ENCODE measurements at regions of chr13 and their contacts with region 1.

Region 1: DNA sequence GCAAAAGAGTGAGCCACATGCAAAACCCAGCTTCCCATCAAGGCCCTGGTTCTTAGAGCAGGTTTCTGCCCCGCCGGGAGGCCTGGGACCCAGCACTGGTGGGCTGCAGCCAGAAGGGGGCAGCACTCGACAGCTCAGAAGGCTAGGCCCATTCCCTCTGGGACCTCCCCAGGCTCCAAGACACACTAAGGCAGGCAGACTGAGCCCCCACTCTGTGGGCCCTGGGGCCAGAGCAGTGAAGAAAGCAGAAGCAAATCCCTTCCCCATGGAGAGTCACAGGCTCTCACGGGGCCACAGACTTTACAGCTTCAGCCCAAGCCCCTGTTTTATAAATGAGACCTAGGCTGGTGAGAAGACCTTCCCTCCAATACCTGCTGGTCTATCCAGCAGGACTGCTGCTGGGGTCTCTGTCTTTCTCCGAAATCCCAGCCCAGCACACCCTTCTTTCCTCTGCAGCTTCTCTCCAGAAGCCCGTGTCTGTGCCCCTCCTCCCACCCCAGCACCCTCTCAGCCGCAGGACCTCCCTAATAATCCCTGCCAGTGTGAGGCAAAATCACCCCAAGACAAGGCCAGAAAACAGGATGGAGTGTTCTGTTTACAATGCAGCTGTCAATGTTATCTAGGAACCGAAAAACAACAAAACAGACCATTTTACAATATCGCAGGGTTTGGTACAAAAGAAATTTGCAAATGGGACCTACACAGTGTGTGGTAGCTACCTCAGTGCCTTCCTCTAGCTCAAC is 109.3 kb downstream of the ABCC4 start:
- DNase-seq: peak; percentile 93
- H3K4me3 ChIP-seq: no peak overlapping the region
- H3K27ac ChIP-seq: no peak overlapping the region
- H3K4me1 ChIP-seq: no peaks in the 10 kb centered on the region
- H3K27me3 ChIP-seq: no peaks in the 10 kb centered on the region
- CTCF ChIP-seq: peak; percentile 57 to 73 (median 60)
- EP300 ChIP-seq: no peak
- POLR2A ChIP-seq: no peak

Region 2: DNA sequence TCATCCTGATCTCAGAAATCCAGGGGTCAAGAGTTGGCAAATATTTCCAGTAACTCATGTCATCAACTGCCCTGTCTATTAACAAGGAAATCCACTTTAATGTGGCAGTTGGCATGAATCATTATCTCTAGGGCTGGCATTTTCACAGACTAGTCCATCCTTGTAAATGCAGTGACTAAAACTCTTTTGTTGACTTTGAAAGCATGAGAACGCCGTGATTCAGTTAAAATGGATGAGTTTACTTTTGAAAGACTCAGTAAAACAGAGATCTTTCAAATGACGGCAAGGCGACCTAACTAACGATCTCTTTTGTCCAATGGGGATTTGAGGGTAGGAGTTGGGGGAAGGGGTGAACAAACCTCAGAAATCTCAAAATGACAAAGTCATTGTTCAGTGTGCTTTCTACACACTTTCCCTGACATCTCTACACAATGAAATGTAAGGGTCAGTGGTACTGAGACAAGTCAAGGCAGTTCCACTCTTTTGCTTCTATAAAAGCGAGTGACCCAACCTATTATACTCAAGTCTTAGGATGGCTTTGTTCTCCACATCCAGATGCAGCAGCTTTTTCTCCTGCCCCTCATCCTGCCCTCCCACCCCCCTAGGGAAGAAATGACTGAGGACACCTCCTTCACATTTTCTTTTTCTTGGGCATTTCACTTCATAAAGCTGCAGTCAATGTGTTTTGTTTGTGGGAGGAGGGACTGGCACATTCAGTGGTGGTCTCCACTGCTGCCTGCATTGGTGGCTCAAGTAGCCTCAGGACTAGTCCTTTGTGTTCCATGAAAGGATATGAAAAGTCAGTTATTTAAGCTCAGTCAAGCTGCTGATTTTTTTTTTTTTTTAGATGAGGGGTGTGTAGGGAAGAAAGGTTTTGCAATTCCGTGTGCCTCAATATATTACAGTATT is 91.2 kb before region 1 on chr13:
- intact Hi-C with region 1: no loop called
- DNase-seq: no peak
- H3K4me3 ChIP-seq: no peak overlapping the region
- H3K27ac ChIP-seq: no peak overlapping the region
- H3K4me1 ChIP-seq: no peaks in the 10 kb centered on the region
- H3K27me3 ChIP-seq: no peaks in the 10 kb centered on the region
- CTCF ChIP-seq: no peak
- EP300 ChIP-seq: no peak
- POLR2A ChIP-seq: no peak

Region 3: DNA sequence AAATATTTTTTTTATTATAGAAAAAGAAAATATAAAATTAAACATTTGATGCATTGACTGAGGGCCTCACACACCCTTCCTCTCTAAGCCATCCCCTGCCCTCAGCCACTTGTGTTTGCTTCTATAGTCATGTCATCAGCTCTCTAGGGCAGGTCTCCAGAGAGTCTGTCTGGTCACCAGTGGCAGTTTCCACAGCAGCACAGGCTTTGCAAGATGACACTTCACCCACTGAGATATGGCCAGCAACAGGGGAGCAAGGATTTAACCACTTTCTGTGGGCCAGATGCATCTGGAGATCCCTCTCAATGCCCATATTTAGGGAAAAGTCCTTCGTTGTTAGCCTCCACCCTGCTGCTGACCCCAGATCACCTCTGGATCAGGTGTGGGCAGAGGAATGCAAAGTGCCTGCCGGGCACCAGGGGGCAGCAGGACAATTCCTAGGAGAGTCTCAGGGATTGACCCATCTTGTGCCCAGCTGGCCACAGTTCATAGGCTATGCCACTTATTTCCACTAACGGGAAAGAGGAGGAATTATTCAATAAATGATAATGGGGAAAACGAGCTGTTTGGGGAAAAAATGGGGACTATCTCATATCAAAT is 104.4 kb after region 1 on chr13:
- intact Hi-C with region 1: loop called (anchors 5 kb)
- DNase-seq: no peak
- H3K4me3 ChIP-seq: no peak overlapping the region
- H3K27ac ChIP-seq: no peak overlapping the region
- H3K4me1 ChIP-seq: peaks cover 0 to 17% (median 13%) of the 10 kb centered on the region in 4 donors
- H3K27me3 ChIP-seq: no peaks in the 10 kb centered on the region
- CTCF ChIP-seq: peak; percentile 53 to 67 (median 58)
- EP300 ChIP-seq: no peak
- POLR2A ChIP-seq: no peak

Region 4: GRCh38 chr13:95378603-95379002 is 186.6 kb after region 1 on chr13:
- intact Hi-C with region 1: loop called (anchors 2 kb)
- DNase-seq: no peak
- H3K4me3 ChIP-seq: no peak overlapping the region
- H3K27ac ChIP-seq: no peak overlapping the region
- H3K4me1 ChIP-seq: peaks cover 6 to 15% (median 9%) of the 10 kb centered on the region in 4 donors
- H3K27me3 ChIP-seq: no peaks in the 10 kb centered on the region
- CTCF ChIP-seq: no peak
- EP300 ChIP-seq: no peak
- POLR2A ChIP-seq: no peak

Region 5: GRCh38 chr13:95403828-95404522 is 212.0 kb after region 1 on chr13:
- intact Hi-C with region 1: loop called (anchors 1 kb)
- DNase-seq: no peak
- H3K4me3 ChIP-seq: peak overlapping the region; percentile 39 to 46 (median 42)
- H3K27ac ChIP-seq: no peak overlapping the region
- H3K4me1 ChIP-seq: peaks cover 5 to 11% (median 10%) of the 10 kb centered on the region in 4 donors
- H3K27me3 ChIP-seq: peaks cover 0 to 9% (median 0%) of the 10 kb centered on the region in 4 donors
- CTCF ChIP-seq: peak; percentile 91 to 94 (median 93)
- EP300 ChIP-seq: no peak
- POLR2A ChIP-seq: no peak

Region 6: GRCh38 chr13:95643936-95644598 is 452.1 kb after region 1 on chr13:
- intact Hi-C with region 1: no loop called
- DNase-seq: no peak
- H3K4me3 ChIP-seq: peak overlapping the region; percentile 70 to 74 (median 72)
- H3K27ac ChIP-seq: peak overlapping the region; percentile 67 to 82 (median 79)
- H3K4me1 ChIP-seq: peaks cover 24 to 44% (median 43%) of the 10 kb centered on the region in 4 donors
- H3K27me3 ChIP-seq: peaks cover 0 to 26% (median 0%) of the 10 kb centered on the region in 4 donors
- CTCF ChIP-seq: no peak
- EP300 ChIP-seq: no peak
- POLR2A ChIP-seq: no peak